ENCODE measurements at regions of chr20 and their contacts with region 1.

Region 1: GRCh38 chr20:2005831-2006426 is 12.1 kb upstream of the PDYN start:
- DNase-seq: no peak
- H3K4me3 ChIP-seq: no peak overlapping the region
- CTCF ChIP-seq: no peak

Region 2: GRCh38 chr20:2022163-2022562 is 16.2 kb after region 1 on chr20:
- CTCF ChIA-PET with region 1: interaction called, 22 read pairs
- POLR2A ChIA-PET with region 1: no interaction called
- DNase-seq: no peak
- H3K4me3 ChIP-seq: no peak overlapping the region
- CTCF ChIP-seq: no peak

Region 3: GRCh38 chr20:2032155-2032554 is 26.2 kb after region 1 on chr20:
- CTCF ChIA-PET with region 1: interaction called, 17 read pairs
- POLR2A ChIA-PET with region 1: no interaction called
- DNase-seq: no peak
- H3K4me3 ChIP-seq: no peak overlapping the region
- CTCF ChIP-seq: no peak

Region 4: DNA sequence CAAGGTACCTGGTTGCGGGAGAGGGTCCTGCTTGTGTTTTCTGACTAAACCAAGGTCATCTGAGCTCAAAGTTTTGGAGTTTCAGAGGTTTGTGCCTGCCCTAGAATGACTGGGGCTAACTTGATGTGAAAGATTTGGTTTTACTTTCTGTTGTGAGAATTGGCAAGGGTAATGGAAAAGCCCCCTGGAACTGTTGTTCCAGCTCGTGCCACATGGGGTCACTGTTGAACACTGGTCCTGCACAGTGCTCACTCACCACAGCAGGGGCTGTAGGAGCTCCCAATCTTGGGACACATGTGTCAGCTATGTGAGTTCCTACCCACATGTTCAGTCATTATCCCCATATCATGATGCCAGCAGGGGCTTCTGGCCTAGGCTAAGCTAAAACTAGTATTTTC is 381.2 kb after region 1 on chr20:
- CTCF ChIA-PET with region 1: no interaction called
- POLR2A ChIA-PET with region 1: no interaction called
- DNase-seq: no peak
- H3K4me3 ChIP-seq: no peak overlapping the region
- CTCF ChIP-seq: peak; percentile 41

Measured in AG04449 (cell line).